Esophagus squamous epithelium (tissue), 5 donors: ENCODE measurements at regions of chr11 and their contacts with region 1.

Region 1: GRCh38 chr11:43895601-43896000 is 15.0 kb downstream of the ALKBH3 start:
- DNase-seq: no peak
- H3K4me3 ChIP-seq: no peak overlapping the region
- H3K27ac ChIP-seq: no peak overlapping the region
- H3K4me1 ChIP-seq: no peaks in the 10 kb centered on the region
- H3K27me3 ChIP-seq: no peaks in the 10 kb centered on the region
- CTCF ChIP-seq: no peak
- POLR2A ChIP-seq: no peak

Region 2: DNA sequence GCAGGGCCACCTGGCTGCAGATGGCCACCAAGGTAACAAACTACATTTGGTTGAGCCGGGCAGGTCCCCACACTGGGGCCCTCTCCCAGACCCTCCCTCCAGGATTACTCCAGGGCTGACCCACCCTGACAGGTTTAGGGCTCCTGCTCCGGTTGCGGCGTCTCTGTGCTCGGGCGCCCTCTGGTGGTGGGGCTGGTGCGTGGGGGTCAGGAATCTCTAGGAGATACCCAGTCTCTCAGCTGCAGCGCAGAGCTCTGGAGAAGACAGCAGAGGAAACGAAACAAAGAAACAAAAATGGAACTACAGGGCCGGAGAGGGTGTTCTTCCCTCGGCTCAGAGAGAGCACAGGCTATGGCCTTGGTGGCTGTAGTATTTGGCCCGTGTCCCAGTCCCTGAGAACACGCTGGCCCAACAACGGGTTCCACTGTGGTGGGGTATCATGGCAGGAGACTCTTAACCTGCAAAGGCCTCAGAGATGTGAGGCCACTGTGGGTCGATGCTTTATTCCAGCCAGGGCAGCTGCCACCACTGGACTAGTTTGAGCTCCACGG is 49.2 kb after region 1 on chr11:
- intact Hi-C with region 1: loop called (anchors 10 kb)
- DNase-seq: no peak
- H3K4me3 ChIP-seq: peak overlapping the region; percentile 46 to 86 (median 58)
- H3K27ac ChIP-seq: peak overlapping the region; percentile 80 to 96 (median 86)
- H3K4me1 ChIP-seq: peaks cover 17 to 39% (median 21%) of the 10 kb centered on the region in 3 donors
- H3K27me3 ChIP-seq: peaks cover 0 to 80% (median 5%) of the 10 kb centered on the region in 4 donors
- CTCF ChIP-seq: peak; percentile 59 to 82 (median 68)
- POLR2A ChIP-seq: no peak

Region 3: GRCh38 chr11:44036811-44037657 is 141.4 kb after region 1 on chr11:
- intact Hi-C with region 1: loop called (anchors 5 kb)
- DNase-seq: no peak
- H3K4me3 ChIP-seq: no peak overlapping the region
- H3K27ac ChIP-seq: peak overlapping the region in 1 of 4 donors; percentile 16
- H3K4me1 ChIP-seq: peaks cover 0 to 11% (median 0%) of the 10 kb centered on the region in 3 donors
- H3K27me3 ChIP-seq: no peaks in the 10 kb centered on the region
- CTCF ChIP-seq: peak in 5 of 6 experiments; percentile 53 to 67 (median 59)
- POLR2A ChIP-seq: no peak